ENCODE measurements at regions of chr17 and their contacts with region 1.

Region 1: DNA sequence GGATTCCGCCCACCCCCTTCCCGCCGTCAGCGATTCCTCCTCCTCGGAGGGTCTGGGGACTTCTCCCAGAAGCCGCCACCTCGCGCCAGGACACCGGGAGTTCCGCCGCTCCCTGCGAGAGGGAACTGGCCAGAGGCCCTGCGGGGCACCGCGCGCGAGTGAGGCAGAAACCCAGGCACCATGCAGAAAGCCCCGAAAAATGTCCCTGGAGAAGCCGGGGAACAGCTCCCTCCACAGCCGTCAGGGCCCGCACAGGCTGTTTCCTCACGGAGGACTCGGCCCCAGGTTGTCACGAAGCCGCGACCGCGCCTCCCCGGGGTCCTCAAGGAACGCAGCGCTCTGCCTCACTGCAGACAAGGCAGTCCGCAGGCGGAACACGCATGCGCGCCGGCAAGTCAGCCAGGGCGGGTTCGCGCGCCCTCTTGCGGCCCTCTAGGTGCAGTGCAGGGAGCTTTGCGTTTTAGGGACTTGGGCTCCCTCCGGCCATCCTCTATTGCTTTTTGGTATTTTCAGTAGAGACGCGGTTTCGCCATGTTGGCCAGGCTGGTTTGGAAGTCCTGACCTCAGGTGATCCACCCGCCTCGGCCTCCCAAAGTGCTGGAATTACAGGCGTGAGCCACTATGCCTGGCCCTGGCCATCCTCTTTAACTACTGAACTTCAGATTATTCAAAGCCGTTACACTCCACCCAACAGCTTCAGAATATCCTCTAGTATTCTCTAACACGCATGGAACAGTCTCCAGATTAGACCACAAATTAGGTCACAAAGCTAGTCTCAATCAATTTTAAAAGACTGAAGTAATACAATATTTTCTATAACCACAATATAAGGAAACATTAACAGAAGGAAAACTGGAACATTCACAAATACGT is 20.3 kb upstream of the ZNF287 start:
- DNase-seq: peak; percentile 89 to 94
- ATAC-seq: peak; percentile 85 to 96 (median 93)
- H3K4me3 ChIP-seq: peak overlapping the region; percentile 38 to 72 (median 64)
- H3K27ac ChIP-seq: peak overlapping the region in 9 of 10 donors; percentile 42 to 83 (median 60)
- H3K4me1 ChIP-seq: peaks cover 0 to 21% (median 8%) of the 10 kb centered on the region in 9 donors
- H3K27me3 ChIP-seq: peaks cover 0 to 27% (median 0%) of the 10 kb centered on the region in 7 donors
- CTCF ChIP-seq: peak; percentile 98 to 100 (median 100)

Region 2: DNA sequence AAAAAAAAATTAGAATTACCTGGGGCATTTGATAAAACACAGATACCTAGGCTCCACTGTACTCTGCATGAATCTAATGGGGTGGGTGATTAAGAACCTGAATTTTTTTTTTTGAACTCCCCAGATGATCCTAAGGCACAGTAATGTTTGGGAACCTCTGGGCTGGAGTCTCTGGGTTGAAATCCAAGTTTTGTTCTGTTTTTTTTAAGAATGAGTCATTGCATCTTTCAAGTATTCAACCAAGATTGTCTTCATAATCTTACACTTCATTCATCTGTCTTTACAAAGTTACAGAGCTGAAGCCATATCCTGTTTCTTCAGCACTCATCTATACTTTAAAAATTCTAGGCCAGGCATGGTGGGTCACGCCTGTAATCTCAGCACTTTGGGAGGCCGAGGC is 319.7 kb before region 1 on chr17:
- intact Hi-C with region 1: no loop called
- DNase-seq: no peak
- ATAC-seq: no peak
- H3K4me3 ChIP-seq: no peak overlapping the region
- H3K27ac ChIP-seq: no peak overlapping the region
- H3K4me1 ChIP-seq: peaks cover 0 to 35% (median 0%) of the 10 kb centered on the region in 9 donors
- H3K27me3 ChIP-seq: no peaks in the 10 kb centered on the region
- CTCF ChIP-seq: no peak

Region 3: DNA sequence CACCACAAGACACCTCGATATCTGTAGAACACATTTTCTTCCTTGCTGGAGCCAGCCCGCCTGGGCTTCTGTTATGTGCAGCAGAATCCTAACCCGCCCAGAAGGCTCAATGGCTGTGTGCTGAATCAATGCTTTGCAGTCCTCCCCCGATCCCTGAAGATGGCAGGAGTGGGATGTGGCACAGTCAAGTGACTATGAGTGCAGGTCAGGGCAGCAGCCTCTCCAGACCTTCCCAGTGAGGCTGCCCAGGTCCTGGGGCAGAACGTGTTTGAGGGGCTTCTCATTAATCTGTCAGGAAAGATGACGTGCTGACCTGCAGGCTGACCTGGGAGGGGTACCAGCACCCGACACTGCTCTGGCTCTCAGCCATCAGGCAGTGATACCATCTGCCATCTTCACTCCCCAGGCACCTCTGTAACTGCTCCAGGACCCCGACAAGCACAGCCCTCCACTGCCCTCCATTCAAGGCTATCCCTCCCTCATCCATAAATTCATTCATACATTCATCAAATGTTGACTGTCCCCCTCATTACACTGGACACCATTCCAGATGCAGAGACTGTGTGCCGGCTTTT is 132.5 kb before region 1 on chr17:
- intact Hi-C with region 1: loop called in 1 of 10 experiments (anchors 10 kb)
- DNase-seq: no peak
- ATAC-seq: no peak
- H3K4me3 ChIP-seq: no peak overlapping the region
- H3K27ac ChIP-seq: no peak overlapping the region
- H3K4me1 ChIP-seq: peaks cover 0 to 16% (median 7%) of the 10 kb centered on the region in 9 donors
- H3K27me3 ChIP-seq: no peaks in the 10 kb centered on the region
- CTCF ChIP-seq: no peak

Region 4: DNA sequence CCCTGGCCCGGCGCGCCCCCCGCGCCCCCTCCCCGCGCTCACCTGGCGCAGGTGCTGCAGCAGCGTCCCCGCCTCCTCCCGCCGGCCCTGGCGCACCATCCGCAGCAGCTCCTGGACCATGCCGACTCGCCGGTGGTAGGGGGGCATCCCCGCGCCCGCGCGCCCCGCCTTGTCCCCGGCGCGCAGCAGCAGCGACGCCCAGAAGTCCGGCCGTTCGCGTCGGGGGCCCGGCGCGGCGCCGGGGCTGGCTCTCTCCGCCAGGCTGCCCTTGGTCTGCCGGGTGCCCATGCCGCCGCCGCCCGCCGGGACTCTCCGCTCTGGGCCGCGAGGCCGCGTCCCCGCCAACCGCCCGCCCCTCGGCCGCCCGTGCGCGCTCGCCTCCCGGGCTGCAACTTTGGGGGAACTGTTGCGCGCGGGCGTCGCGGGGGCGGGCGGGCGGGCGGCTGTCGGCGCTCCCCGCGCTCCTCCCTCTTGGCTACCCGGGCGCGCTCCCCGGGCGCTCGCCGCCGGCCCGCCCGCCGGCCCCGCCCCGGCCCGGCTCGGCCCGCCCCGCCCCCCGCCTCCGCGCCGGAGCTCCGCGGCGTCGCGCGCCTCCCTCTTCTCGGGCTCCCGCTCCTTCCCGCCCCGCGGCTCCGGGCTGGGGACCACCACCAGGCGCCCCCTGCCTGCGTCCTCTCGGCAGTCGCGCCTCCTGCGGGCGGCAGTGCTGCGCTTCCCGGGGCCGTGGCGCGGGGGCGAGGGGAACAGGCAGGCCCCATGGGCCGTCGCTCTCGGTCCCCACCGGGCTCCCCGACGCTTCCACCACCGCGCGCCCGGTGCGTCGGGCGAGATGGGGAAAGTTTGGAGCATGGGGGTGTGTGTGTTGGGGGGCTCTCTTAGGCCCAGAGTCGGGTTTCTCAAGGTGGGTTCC is 97.4 kb before region 1 on chr17 and contains the start of gene LRRC75A:
- intact Hi-C with region 1: no loop called
- DNase-seq: peak; percentile 17 to 55
- ATAC-seq: peak; percentile 56 to 92 (median 74)
- H3K4me3 ChIP-seq: peak within 1 kb of the TSS in 9 of 10 donors; percentile 51 to 70 (median 59)
- H3K27ac ChIP-seq: peak within 1 kb of the TSS in 4 of 10 donors; percentile 20 to 66 (median 24)
- H3K4me1 ChIP-seq: peaks cover 5 to 31% (median 15%) of the 10 kb centered on the region in 9 donors
- H3K27me3 ChIP-seq: peaks cover 0 to 26% (median 0%) of the 10 kb centered on the region in 7 donors
- CTCF ChIP-seq: peak in 3 of 9 donors; percentile 34 to 42 (median 39)
- total RNA-seq, gene LRRC75A: 0.34 to 1.3 (median 0.56) TPM

Region 5: DNA sequence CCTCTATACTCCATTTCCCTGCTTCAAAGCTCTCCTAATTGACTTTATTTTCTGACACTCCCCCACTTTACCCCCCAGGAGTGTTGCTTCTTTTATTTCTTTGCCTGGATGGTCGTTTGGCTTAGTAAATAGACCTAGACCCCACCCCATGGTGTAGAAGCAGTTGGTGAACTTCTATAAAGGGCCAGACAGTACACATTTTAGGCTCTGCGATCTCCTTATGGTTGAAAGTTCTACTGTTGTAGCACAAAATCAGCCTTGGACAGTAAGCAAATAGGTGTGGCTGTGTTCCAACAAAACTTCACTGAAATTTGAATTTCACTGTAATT is 52.2 kb before region 1 on chr17:
- intact Hi-C with region 1: loop called in 8 of 10 experiments (anchors 1 to 10 kb)
- DNase-seq: no peak
- ATAC-seq: no peak
- H3K4me3 ChIP-seq: peak overlapping the region in 3 of 10 donors; percentile 72 to 78 (median 72)
- H3K27ac ChIP-seq: peak overlapping the region in 4 of 10 donors; percentile 19 to 97 (median 94)
- H3K4me1 ChIP-seq: peaks cover 0 to 16% (median 2%) of the 10 kb centered on the region in 9 donors
- H3K27me3 ChIP-seq: peaks cover 0 to 5% (median 0%) of the 10 kb centered on the region in 7 donors
- CTCF ChIP-seq: no peak

Region 6: GRCh38 chr17:16568541-16569357 is 20.6 kb before region 1 on chr17 and contains the start of gene ZNF287:
- intact Hi-C with region 1: loop called in 1 of 10 experiments (anchors 1 kb)
- DNase-seq: peak; percentile 96
- ATAC-seq: peak; percentile 98 to 100 (median 100)
- H3K4me3 ChIP-seq: peak within 1 kb of the TSS; percentile 45 to 94 (median 82)
- H3K27ac ChIP-seq: peak within 1 kb of the TSS; percentile 8 to 84 (median 74)
- H3K4me1 ChIP-seq: peaks cover 0 to 16% (median 9%) of the 10 kb centered on the region in 9 donors
- H3K27me3 ChIP-seq: no peaks in the 10 kb centered on the region
- CTCF ChIP-seq: no peak
- total RNA-seq, gene ZNF287: 7.8 to 14.6 (median 11.4) TPM

Region 7: DNA sequence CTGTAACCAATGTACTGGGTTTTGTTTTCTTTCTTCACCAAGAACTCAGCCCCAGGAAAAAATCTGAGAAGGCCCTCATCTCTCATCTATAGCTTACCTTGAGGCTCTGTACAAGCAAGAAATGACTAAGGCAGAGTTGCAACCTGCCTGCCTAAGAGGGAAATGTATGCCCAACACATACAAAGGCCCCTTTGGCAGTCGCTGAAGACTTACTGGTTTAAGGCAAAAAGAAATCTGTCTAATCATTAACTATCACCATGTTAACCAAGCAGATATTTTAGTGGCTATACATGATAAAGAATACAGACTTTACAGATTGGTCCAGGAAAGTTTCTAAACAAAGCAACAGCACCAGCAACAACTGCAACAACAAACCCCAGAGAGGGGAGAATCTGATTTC is 50.1 kb after region 1 on chr17:
- intact Hi-C with region 1: no loop called
- DNase-seq: no peak
- ATAC-seq: no peak
- H3K4me3 ChIP-seq: no peak overlapping the region
- H3K27ac ChIP-seq: no peak overlapping the region
- H3K4me1 ChIP-seq: no peaks in the 10 kb centered on the region
- H3K27me3 ChIP-seq: no peaks in the 10 kb centered on the region
- CTCF ChIP-seq: no peak

Region 8: GRCh38 chr17:16653209-16654041 is 64.1 kb after region 1 on chr17 and contains the start of gene ZNF624:
- intact Hi-C with region 1: loop called in 1 of 10 experiments (anchors 5 kb)
- DNase-seq: peak; percentile 94 to 98
- ATAC-seq: peak; percentile 95 to 99 (median 98)
- H3K4me3 ChIP-seq: peak within 1 kb of the TSS; percentile 47 to 87 (median 74)
- H3K27ac ChIP-seq: peak within 1 kb of the TSS; percentile 89 to 97 (median 95)
- H3K4me1 ChIP-seq: peaks cover 0 to 19% (median 13%) of the 10 kb centered on the region in 9 donors
- H3K27me3 ChIP-seq: no peaks in the 10 kb centered on the region
- CTCF ChIP-seq: no peak
- total RNA-seq, gene ZNF624: 1.4 to 2.9 (median 2.1) TPM

Region 9: GRCh38 chr17:17041571-17042380 is 452.4 kb after region 1 on chr17:
- intact Hi-C with region 1: no loop called
- DNase-seq: peak; percentile 99
- ATAC-seq: peak; percentile 92 to 97 (median 96)
- H3K4me3 ChIP-seq: peak overlapping the region in 9 of 10 donors; percentile 36 to 65 (median 55)
- H3K27ac ChIP-seq: peak overlapping the region in 9 of 10 donors; percentile 44 to 87 (median 71)
- H3K4me1 ChIP-seq: peaks cover 9 to 55% (median 49%) of the 10 kb centered on the region in 9 donors
- H3K27me3 ChIP-seq: no peaks in the 10 kb centered on the region
- CTCF ChIP-seq: no peak

Measured in heart right ventricle (tissue), 16 donors.